ENCODE measurements at regions of chr16 and their contacts with region 1.

Region 1: GRCh38 chr16:28317040-28317880 is 24.9 kb downstream of the SBK1 start:
- DNase-seq: peak; percentile 52
- ATAC-seq: peak; percentile 64
- H3K4me3 ChIP-seq: no peak overlapping the region
- H3K27ac ChIP-seq: no peak overlapping the region
- H3K4me1 ChIP-seq: no peaks in the 10 kb centered on the region
- H3K27me3 ChIP-seq: no peaks in the 10 kb centered on the region
- CTCF ChIP-seq: peak; percentile 75

Region 2: GRCh38 chr16:27769561-27770255 is 547.6 kb before region 1 on chr16:
- CTCF ChIA-PET with region 1: no interaction called
- POLR2A ChIA-PET with region 1: no interaction called
- intact Hi-C with region 1: no loop called
- DNase-seq: peak; percentile 7
- ATAC-seq: no peak
- H3K4me3 ChIP-seq: no peak overlapping the region
- H3K27ac ChIP-seq: no peak overlapping the region
- H3K4me1 ChIP-seq: no peaks in the 10 kb centered on the region
- H3K27me3 ChIP-seq: no peaks in the 10 kb centered on the region
- CTCF ChIP-seq: no peak

Region 3: GRCh38 chr16:28237754-28238357 is 79.4 kb before region 1 on chr16:
- CTCF ChIA-PET with region 1: no interaction called
- POLR2A ChIA-PET with region 1: no interaction called
- intact Hi-C with region 1: no loop called
- DNase-seq: no peak
- ATAC-seq: no peak
- H3K4me3 ChIP-seq: no peak overlapping the region
- H3K27ac ChIP-seq: no peak overlapping the region
- H3K4me1 ChIP-seq: no peaks in the 10 kb centered on the region
- H3K27me3 ChIP-seq: no peaks in the 10 kb centered on the region
- CTCF ChIP-seq: no peak

Region 4: DNA sequence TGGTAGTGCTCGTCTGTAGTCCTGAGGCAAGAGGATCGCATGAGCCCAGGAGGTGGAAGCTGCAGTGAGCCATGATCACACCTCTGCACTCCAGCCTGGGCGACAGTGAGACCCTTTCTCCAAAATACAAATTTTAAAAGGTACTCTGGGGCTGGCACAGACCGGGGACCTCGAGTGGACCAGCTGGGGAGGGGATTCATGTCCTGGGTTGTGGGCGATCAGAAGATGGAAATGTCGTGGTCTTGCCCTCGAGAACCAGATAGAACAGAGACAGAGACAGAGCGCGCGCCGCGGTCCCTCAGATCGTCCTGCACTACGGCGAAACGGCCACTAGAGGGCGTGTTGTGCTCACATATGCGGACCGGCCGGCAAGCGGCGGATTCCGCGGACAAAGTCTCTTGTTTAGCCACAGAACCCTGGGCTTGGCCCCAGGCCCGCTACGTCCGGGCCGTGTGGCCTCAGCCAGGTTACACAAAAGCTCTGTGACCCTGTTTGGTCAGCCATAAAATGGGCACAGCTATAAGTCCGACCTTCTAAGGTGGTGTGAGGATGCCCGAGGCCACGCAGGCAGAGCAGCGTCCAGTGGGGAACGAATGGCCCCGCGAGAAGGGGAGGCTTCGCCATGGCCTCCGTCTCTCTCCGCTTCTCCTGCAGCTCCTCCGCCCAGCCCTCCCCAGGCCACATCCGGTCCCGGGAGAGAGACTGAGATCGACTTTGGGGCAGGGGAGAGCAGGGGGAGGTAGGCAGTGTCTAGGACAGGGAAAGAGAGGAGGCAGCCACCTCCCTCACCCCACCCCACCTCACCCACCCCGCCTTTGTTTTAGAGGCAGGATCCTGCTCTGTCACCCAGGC is 39.5 kb before region 1 on chr16:
- CTCF ChIA-PET with region 1: interaction called, 4 read pairs
- POLR2A ChIA-PET with region 1: no interaction called
- intact Hi-C with region 1: loop called (anchors 1 kb)
- DNase-seq: peak; percentile 80
- ATAC-seq: peak; percentile 90
- H3K4me3 ChIP-seq: peak overlapping the region; percentile 71
- H3K27ac ChIP-seq: no peak overlapping the region
- H3K4me1 ChIP-seq: no peaks in the 10 kb centered on the region
- H3K27me3 ChIP-seq: peaks cover 5% of the 10 kb centered on the region; the same call in 1 of the 2 replicates
- CTCF ChIP-seq: peak; percentile 88

Measured in PC-3 (cell line).